AG04450 (cell line): ENCODE measurements at regions of chr10 and their contacts with region 1.

Region 1: DNA sequence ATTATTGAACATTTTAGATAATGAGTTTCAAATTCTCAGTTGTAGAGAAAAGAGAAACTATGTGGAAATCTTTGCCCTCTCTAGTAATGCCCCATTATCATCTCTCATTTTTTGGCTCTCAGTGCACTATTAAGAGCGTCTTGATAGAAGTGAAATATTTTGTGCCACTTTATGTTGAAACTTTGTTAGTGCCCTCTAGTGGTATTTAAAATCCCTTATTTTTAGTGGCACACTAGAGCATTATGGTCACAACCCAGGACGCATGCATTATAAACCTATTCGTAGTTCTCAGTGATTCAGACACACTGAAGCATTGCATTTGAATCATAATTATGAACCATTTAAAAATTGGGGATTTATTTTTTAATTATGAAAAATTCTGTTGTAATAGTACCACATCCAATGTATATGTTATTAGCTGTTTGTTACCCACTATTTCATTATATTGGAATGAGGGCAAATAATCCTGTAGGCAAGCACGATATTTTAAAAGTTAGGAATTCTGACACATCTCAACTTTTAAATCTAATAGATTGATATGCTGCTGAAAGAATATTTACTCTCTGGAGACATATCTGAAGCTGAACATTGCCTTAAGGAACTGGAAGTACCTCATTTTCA is 21.9 kb downstream of the PDCD4 start:
- DNase-seq: no peak
- H3K4me3 ChIP-seq: no peak overlapping the region
- H3K27ac ChIP-seq: no peak overlapping the region
- H3K27me3 ChIP-seq: no peaks in the 10 kb centered on the region
- CTCF ChIP-seq: peak; percentile 55

Region 2: DNA sequence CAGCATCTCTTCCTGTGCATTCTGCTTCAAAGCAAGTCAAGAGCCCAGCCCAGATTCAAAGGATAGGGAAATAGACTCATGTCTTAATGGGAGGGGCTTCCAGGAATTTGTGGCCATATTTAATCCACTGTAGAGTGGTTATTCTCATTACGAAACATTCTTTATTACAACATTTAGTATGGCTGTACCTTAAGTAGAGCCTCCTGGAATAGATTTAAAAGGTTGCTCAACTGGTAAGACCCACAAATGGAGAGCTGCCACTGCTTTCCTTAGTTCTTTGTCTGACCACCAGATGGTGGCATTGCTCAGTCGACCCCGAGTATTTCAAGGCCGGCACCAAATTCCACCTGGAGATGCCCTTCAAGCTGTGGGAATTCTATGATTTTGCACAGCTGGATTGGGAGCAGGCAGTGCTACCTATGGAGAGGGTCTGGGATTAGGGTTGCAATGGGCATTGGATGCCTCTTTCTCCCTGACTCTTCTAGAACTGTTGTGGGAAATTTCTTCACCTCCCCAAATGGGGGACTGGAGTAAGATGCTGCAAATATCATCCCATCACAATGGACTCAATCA is 147.3 kb before region 1 on chr10:
- CTCF ChIA-PET with region 1: interaction called, 30 read pairs
- POLR2A ChIA-PET with region 1: no interaction called
- DNase-seq: peak; percentile 39
- H3K4me3 ChIP-seq: no peak overlapping the region
- H3K27ac ChIP-seq: no peak overlapping the region
- H3K27me3 ChIP-seq: peaks cover 12% of the 10 kb centered on the region
- CTCF ChIP-seq: peak; percentile 83

Region 3: DNA sequence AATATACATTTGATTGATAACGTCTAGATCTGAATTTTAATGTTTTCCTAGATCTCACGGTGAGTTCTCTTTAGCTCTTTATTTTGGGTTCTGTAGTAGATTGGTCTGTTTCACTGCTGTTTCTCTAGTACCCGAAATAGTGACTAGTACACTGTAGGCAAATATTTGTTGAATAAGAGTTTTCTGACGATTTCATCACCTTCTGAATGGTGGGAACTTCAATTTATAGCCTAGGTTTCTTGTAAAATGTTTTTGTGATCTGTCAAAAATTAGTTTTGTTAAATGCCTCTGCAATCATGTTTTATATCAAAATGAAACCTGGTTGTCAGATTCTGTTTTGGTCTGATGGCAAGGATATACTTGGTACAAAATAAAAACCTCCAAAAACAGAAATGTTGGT is 11.8 kb before region 1 on chr10:
- CTCF ChIA-PET with region 1: interaction called, 10 read pairs
- POLR2A ChIA-PET with region 1: no interaction called
- DNase-seq: no peak
- H3K4me3 ChIP-seq: no peak overlapping the region
- H3K27ac ChIP-seq: no peak overlapping the region
- H3K27me3 ChIP-seq: no peaks in the 10 kb centered on the region
- CTCF ChIP-seq: no peak

Region 4: DNA sequence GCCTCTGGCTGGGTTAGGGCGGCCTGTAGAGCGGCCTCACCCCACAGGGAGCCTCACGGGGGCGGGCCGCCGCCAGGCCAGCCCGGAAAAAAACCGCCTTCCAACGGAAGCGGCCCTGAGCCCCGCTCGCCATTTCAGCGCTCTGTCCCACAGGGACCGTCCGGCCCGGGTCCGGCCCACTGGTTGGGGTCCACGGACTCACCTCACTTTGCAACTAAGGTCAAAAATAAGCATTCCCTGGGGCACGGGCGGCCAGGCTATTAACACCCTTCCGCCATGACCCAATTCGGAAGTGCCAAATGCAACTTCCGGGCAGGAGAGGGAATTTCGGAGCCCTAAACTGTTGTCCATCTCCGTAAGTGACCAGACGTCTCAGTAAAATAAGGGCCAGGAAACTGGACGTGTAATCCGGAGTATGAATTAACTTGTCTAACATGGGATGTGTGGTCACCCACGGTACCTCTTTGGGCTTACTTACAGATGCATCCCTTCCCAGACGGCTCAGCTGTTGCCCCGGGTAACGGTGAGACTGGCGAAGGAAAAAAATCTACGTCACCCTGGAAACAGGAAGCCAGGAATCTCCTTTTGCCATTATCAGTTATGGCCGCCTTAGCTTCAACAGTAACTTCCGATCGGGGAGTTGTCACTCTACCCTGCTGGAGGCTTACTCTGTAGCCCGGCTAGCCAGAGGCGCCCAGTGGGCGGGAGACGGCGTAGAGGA is 25.1 kb after region 1 on chr10 and contains the start of gene BBIP1:
- CTCF ChIA-PET with region 1: interaction called, 13 read pairs
- POLR2A ChIA-PET with region 1: interaction called, 4 read pairs
- DNase-seq: peak; percentile 99
- H3K4me3 ChIP-seq: peak within 1 kb of the TSS; percentile 81
- H3K27ac ChIP-seq: peak within 1 kb of the TSS; percentile 98
- H3K27me3 ChIP-seq: no peaks in the 10 kb centered on the region
- CTCF ChIP-seq: no peak
- polyA plus RNA-seq, gene BBIP1: 29.9 and 41.5 TPM in 2 replicates

Region 5: GRCh38 chr10:111504376-111504775 is 610.7 kb after region 1 on chr10:
- CTCF ChIA-PET with region 1: no interaction called
- POLR2A ChIA-PET with region 1: no interaction called
- DNase-seq: no peak
- H3K4me3 ChIP-seq: no peak overlapping the region
- H3K27ac ChIP-seq: no peak overlapping the region
- H3K27me3 ChIP-seq: no peaks in the 10 kb centered on the region
- CTCF ChIP-seq: no peak